H1 (cell line): ENCODE measurements at regions of chr1 and their contacts with region 1.

Region 1: GRCh38 chr1:18139198-18139981 is 31.8 kb downstream of the IGSF21 start:
- DNase-seq: no peak
- H3K4me3 ChIP-seq: no peak overlapping the region
- H3K27ac ChIP-seq: no peak overlapping the region
- H3K4me1 ChIP-seq: peaks cover 0 to 3% (median 0%) of the 10 kb centered on the region in 4 experiments; a peak in 2 of 7 replicates
- H3K27me3 ChIP-seq: no peaks in the 10 kb centered on the region
- CTCF ChIP-seq: peak in 2 of 3 experiments; percentile 12 to 15; a peak in 2 of 4 replicates
- EP300 ChIP-seq: no peak
- POLR2A ChIP-seq: no peak
- RAD21 ChIP-seq: no peak; a peak in 1 of 4 replicates

Region 2: DNA sequence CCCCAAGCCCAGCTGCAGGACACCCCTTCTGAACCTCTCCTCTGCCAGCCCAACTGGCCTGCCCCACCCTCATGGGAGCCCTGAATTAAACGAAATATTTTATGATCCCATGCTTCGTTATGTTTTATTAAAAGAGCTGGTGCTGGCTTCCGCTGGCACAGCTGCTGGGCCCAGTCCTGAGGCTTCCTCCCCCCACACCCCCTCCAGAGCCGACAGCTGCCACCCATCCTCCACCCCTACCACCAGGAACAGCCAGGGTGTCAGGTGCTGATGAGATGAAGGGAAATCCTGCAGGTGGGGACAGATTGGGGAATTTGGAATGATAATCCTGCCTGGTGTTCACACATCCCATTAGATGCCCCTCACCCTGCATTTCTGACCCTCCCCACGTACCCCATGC is 12.8 kb before region 1 on chr1:
- CTCF ChIA-PET with region 1: interaction called, 13 read pairs
- POLR2A ChIA-PET with region 1: interaction called, 3 read pairs
- DNase-seq: no peak
- H3K4me3 ChIP-seq: no peak overlapping the region
- H3K27ac ChIP-seq: no peak overlapping the region
- H3K4me1 ChIP-seq: peaks cover 0 to 7% (median 2%) of the 10 kb centered on the region in 4 experiments; a peak in 3 of 7 replicates
- H3K27me3 ChIP-seq: no peaks in the 10 kb centered on the region
- CTCF ChIP-seq: no peak
- EP300 ChIP-seq: no peak
- POLR2A ChIP-seq: no peak
- RAD21 ChIP-seq: no peak